Activated B cell treated with CpG ODN at 0.5 μM for 24 hours (primary cell): ENCODE measurements at regions of chr17 and their contacts with region 1.

Region 1: DNA sequence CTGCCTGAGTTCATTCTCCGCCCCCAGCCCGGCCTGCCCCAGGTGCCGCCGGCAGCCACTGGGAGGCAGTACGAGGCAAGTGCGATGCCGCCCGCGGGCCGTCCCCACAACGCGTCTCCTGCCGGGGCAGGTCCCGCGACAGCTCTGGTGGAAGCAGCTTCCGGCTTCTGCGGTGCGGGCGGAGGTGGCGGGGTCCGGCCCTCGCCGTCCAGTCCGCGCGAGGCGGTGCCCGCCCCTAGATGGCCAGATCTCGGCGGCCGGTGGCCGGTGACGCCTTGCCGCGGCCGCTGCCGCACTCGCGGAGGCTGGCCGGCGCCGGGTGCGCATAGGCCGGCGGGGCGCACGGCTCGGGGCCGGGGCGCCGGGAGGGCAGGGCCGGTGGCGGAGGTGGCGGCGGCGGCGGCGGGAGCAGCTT is 1.8 kb downstream of the GJD3 start:
- DNase-seq: peak; percentile 73
- ATAC-seq: peak; percentile 85
- H3K4me3 Mint-ChIP-seq: peak overlapping the region; percentile 58
- H3K27ac Mint-ChIP-seq: peak overlapping the region; percentile 67
- H3K4me1 Mint-ChIP-seq: peaks cover 17% of the 10 kb centered on the region
- H3K27me3 Mint-ChIP-seq: peaks cover 14% of the 10 kb centered on the region
- CTCF ChIP-seq: no peak

Region 2: DNA sequence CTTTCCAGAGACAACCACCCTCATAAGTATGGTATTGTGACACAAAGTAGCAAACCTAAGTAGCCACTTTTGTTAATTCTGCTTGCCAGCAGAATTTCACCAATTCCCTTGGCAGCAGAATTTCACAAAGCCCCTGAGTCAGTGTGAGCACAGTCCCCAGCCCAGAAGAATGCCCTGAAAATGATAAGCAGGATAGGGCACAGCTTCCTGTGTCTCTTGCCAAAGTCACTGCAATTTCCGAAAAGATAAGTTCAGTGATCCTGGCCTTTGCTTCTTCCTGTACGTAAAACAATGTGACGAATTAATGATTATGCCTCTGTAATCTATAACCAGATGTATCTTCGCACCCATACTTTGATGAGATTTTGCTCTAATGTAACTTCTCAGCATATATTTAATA is 159.6 kb before region 1 on chr17:
- CTCF ChIA-PET with region 1: no interaction called
- POLR2A ChIA-PET with region 1: no interaction called
- intact Hi-C with region 1: loop called (anchors 5 kb)
- DNase-seq: no peak
- ATAC-seq: no peak
- H3K4me3 Mint-ChIP-seq: no peak overlapping the region
- H3K27ac Mint-ChIP-seq: no peak overlapping the region
- H3K4me1 Mint-ChIP-seq: peaks cover 4% of the 10 kb centered on the region
- H3K27me3 Mint-ChIP-seq: no peaks in the 10 kb centered on the region
- CTCF ChIP-seq: no peak

Region 3: DNA sequence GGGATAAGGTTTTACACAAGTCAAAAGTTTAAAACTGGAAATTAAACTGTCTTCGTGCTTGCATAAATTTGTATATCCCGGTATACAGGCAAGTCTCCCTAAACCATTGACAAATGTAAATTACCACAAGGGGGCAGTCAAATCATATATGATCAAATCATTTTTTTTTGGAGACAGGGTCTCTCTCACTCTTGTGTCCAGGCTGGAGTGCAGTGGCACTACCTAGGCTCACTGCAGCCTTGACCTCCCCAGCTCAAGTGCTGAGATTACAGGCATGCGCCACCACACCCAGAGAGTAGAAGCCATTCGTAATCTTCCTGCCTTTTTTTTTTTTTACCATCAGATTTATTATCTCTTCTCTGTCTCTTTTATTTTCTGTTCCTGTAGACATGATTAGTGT is 36.5 kb after region 1 on chr17:
- CTCF ChIA-PET with region 1: interaction called, 3 read pairs
- POLR2A ChIA-PET with region 1: no interaction called
- intact Hi-C with region 1: loop called (anchors 5 kb)
- DNase-seq: no peak
- ATAC-seq: peak; percentile 61
- H3K4me3 Mint-ChIP-seq: no peak overlapping the region
- H3K27ac Mint-ChIP-seq: no peak overlapping the region
- H3K4me1 Mint-ChIP-seq: peaks cover 15% of the 10 kb centered on the region
- H3K27me3 Mint-ChIP-seq: no peaks in the 10 kb centered on the region
- CTCF ChIP-seq: no peak

Region 4: GRCh38 chr17:40443583-40444327 is 81.1 kb after region 1 on chr17:
- CTCF ChIA-PET with region 1: interaction called, 5 read pairs
- POLR2A ChIA-PET with region 1: interaction called, 3 read pairs
- intact Hi-C with region 1: loop called (anchors 1 kb)
- DNase-seq: peak; percentile 72
- ATAC-seq: peak; percentile 83
- H3K4me3 Mint-ChIP-seq: peak overlapping the region; percentile 81
- H3K27ac Mint-ChIP-seq: peak overlapping the region; percentile 79
- H3K4me1 Mint-ChIP-seq: peaks cover 37% of the 10 kb centered on the region
- H3K27me3 Mint-ChIP-seq: no peaks in the 10 kb centered on the region
- CTCF ChIP-seq: no peak

Region 5: DNA sequence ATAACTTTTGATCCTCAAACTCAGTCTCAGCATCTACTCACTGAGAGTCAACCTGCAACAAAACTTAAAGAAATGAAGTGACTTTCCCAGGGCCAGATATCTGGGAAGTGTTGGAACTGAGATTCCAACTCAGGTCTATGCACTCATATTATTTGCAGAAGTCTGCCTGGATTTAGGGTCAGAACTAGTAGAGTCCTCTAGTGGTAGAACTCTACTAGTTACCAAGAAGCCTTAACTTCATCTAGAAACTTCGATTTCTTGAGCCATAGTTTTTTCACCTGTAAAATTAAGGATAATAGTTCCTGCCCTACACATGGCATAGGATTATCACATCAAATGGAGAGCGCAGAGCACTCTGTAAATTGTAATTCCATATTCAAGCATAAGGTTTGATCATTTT is 364.2 kb after region 1 on chr17:
- CTCF ChIA-PET with region 1: no interaction called
- POLR2A ChIA-PET with region 1: interaction called, 14 read pairs
- intact Hi-C with region 1: no loop called
- DNase-seq: no peak
- ATAC-seq: no peak
- H3K4me3 Mint-ChIP-seq: peak overlapping the region; percentile 12
- H3K27ac Mint-ChIP-seq: peak overlapping the region; percentile 74
- H3K4me1 Mint-ChIP-seq: peaks cover 26% of the 10 kb centered on the region
- H3K27me3 Mint-ChIP-seq: no peaks in the 10 kb centered on the region
- CTCF ChIP-seq: no peak

Region 6: GRCh38 chr17:41648411-41649195 is 1285.9 kb after region 1 on chr17:
- CTCF ChIA-PET with region 1: interaction called, 5 read pairs
- POLR2A ChIA-PET with region 1: no interaction called
- intact Hi-C with region 1: loop called (anchors 5 kb)
- DNase-seq: peak; percentile 85
- ATAC-seq: peak; percentile 91
- H3K4me3 Mint-ChIP-seq: peak overlapping the region; percentile 79
- H3K27ac Mint-ChIP-seq: peak overlapping the region; percentile 54
- H3K4me1 Mint-ChIP-seq: peaks cover 10% of the 10 kb centered on the region
- H3K27me3 Mint-ChIP-seq: no peaks in the 10 kb centered on the region
- CTCF ChIP-seq: peak; percentile 88